ENCODE measurements at regions of chr5 and their contacts with region 1.

Region 1: DNA sequence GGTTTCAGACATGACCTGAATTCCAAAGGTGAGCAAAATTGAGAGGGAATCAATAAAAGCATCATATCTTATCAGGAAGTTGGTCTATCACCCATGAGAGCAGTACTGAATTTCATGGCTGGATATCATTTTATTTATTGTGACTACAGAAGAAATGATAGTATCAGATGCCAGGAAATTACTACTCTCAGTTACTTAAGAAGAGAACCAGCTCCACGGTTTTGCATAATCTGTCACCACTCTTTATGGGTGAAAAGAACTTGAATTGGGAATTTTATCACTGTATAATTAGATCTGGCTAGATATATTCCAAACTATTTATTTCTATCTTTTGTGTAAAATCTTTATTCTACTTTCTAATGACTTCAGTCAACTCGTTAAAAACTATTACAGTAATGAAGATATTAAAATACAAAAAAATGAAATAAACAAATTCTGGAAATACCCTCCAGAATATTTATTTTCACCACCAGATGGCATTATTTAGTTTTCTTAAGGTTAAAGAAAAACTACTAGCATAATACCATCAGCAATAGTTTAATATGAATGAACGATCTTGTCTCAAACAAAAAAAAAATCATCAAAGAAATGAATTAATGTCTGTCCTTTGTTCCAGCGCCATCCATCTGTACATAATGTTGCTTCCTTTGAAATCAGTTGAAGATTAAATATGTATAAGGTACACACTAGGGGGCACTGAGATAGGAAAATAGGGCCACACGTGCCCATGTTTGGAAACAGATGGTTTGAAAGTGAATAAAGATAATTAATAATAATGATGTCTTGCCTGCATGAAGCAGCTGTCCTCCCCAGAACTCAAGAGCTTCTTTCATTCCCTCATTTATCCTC is 84.7 kb upstream of the SLCO6A1 start:
- DNase-seq: no peak
- H3K4me3 ChIP-seq: no peak overlapping the region
- H3K27ac ChIP-seq: no peak overlapping the region
- H3K4me1 ChIP-seq: no peaks in the 10 kb centered on the region
- H3K27me3 ChIP-seq: no peaks in the 10 kb centered on the region
- CTCF ChIP-seq: peak; percentile 9 to 36

Region 2: DNA sequence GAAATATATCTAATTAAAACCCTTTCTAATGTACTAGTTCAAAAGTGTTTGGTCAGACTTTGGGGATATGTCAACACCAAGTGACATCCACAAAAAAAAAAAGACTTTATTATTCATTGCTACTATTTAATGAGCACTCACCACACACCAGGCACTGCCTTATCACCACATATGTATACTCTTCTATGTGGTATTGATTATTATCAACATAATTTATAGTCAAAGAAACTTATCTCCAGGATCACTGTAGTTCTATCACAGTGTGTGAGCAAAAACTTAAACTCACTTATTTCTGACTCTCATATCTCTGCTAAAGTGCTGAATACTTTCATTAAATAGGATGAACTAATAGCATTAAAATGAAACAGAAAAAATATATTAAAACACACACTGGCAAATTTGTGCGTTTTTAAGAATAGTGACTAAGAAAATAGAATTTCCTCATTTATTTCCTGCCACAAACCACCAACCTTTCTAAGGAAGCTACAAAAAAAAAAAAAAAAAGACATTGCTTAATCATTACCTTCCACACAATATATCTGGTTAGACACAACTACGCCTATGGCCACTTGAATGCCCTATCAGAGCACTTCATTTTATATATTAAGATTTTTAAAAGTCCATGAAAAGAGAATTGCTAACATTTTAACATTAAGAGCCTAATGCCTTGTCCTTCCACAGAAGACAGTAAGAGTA is 300.2 kb before region 1 on chr5:
- CTCF ChIA-PET with region 1: no interaction called
- dilution Hi-C with region 1: no loop called
- in situ Hi-C with region 1: no loop called
- intact Hi-C with region 1: no loop called
- DNase-seq: no peak
- H3K4me3 ChIP-seq: no peak overlapping the region
- H3K27ac ChIP-seq: no peak overlapping the region
- H3K4me1 ChIP-seq: no peaks in the 10 kb centered on the region
- H3K27me3 ChIP-seq: no peaks in the 10 kb centered on the region
- CTCF ChIP-seq: no peak

Region 3: GRCh38 chr5:102755686-102756371 is 172.3 kb after region 1 on chr5:
- CTCF ChIA-PET with region 1: no interaction called
- dilution Hi-C with region 1: no loop called
- in situ Hi-C with region 1: loop called in 1 of 2 experiments (anchors 25 kb)
- intact Hi-C with region 1: no loop called
- DNase-seq: peak; percentile 89
- H3K4me3 ChIP-seq: peak overlapping the region; percentile 79 to 88 (median 85)
- H3K27ac ChIP-seq: peak overlapping the region; percentile 92
- H3K4me1 ChIP-seq: peaks cover 27% of the 10 kb centered on the region
- H3K27me3 ChIP-seq: no peaks in the 10 kb centered on the region
- CTCF ChIP-seq: peak in 1 of 2 donors; percentile 16

Region 4: GRCh38 chr5:102971697-102972293 is 388.3 kb after region 1 on chr5:
- CTCF ChIA-PET with region 1: no interaction called
- dilution Hi-C with region 1: no loop called
- in situ Hi-C with region 1: no loop called
- intact Hi-C with region 1: loop called (anchors 5 kb)
- DNase-seq: peak; percentile 9
- H3K4me3 ChIP-seq: no peak overlapping the region
- H3K27ac ChIP-seq: no peak overlapping the region
- H3K4me1 ChIP-seq: no peaks in the 10 kb centered on the region
- H3K27me3 ChIP-seq: no peaks in the 10 kb centered on the region
- CTCF ChIP-seq: peak; percentile 31 to 53

Region 5: GRCh38 chr5:103139264-103139865 is 555.9 kb after region 1 on chr5:
- CTCF ChIA-PET with region 1: no interaction called
- dilution Hi-C with region 1: no loop called
- in situ Hi-C with region 1: no loop called
- intact Hi-C with region 1: loop called (anchors 1 kb)
- DNase-seq: peak; percentile 50
- H3K4me3 ChIP-seq: no peak overlapping the region
- H3K27ac ChIP-seq: no peak overlapping the region
- H3K4me1 ChIP-seq: no peaks in the 10 kb centered on the region
- H3K27me3 ChIP-seq: no peaks in the 10 kb centered on the region
- CTCF ChIP-seq: peak; percentile 89 to 93